ENCODE measurements at regions of chr1 and their contacts with region 1.

Region 1: DNA sequence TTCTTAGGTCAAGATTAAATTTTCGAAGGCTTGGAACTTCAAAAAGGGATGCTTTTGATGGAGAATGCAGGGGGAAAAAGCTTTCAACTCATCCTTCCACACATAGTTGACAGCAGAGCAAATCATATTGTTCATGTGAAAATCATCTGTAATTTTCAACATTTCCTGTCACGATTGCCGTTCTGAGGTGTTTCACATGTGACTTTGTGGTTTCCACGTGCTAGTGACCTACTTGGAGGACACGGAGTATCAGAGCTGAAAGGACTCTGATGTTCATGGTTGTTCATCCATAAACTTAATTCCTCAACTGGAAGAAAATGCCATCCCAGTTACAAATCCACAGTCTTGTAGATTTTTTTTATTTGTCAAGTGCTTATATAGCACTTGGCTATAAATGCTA is 79.1 kb downstream of the ZP4 start:
- DNase-seq: no peak
- H3K4me3 ChIP-seq: no peak overlapping the region
- H3K27ac ChIP-seq: no peak overlapping the region
- H3K27me3 ChIP-seq: no peaks in the 10 kb centered on the region
- CTCF ChIP-seq: no peak

Region 2: GRCh38 chr1:237754627-237755026 is 57.0 kb before region 1 on chr1:
- CTCF ChIA-PET with region 1: no interaction called
- POLR2A ChIA-PET with region 1: no interaction called
- DNase-seq: no peak
- H3K4me3 ChIP-seq: no peak overlapping the region
- H3K27ac ChIP-seq: no peak overlapping the region
- H3K27me3 ChIP-seq: no peaks in the 10 kb centered on the region
- CTCF ChIP-seq: no peak

Region 3: GRCh38 chr1:237791592-237791991 is 20.0 kb before region 1 on chr1:
- CTCF ChIA-PET with region 1: interaction called, 11 read pairs
- POLR2A ChIA-PET with region 1: no interaction called
- DNase-seq: no peak
- H3K4me3 ChIP-seq: no peak overlapping the region
- H3K27ac ChIP-seq: no peak overlapping the region
- H3K27me3 ChIP-seq: no peaks in the 10 kb centered on the region
- CTCF ChIP-seq: no peak